MCF 10A (cell line): ENCODE measurements at regions of chr18 and their contacts with region 1.

Region 1: GRCh38 chr18:2571200-2572143 is at the starts of genes METTL4 and NDC80:
- DNase-seq: peak; percentile 89
- H3K4me3 Mint-ChIP-seq: peak within 1 kb of the TSS; percentile 98
- H3K27ac Mint-ChIP-seq: peak within 1 kb of the TSS; percentile 99
- H3K4me1 Mint-ChIP-seq: peaks cover 45% of the 10 kb centered on the region
- H3K27me3 Mint-ChIP-seq: no peaks in the 10 kb centered on the region
- CTCF ChIP-seq: no peak
- total RNA-seq, gene METTL4: 11.8 and 15.0 TPM in 2 replicates
- total RNA-seq, gene NDC80: 20.4 and 29.6 TPM in 2 replicates

Region 2: GRCh38 chr18:2589345-2590068 is 18.0 kb after region 1 on chr18:
- CTCF ChIA-PET with region 1: interaction called, 3 read pairs
- POLR2A ChIA-PET with region 1: interaction called, 43 read pairs
- intact Hi-C with region 1: no loop called
- DNase-seq: peak; percentile 56
- H3K4me3 Mint-ChIP-seq: no peak overlapping the region
- H3K27ac Mint-ChIP-seq: peak overlapping the region; percentile 85
- H3K4me1 Mint-ChIP-seq: peaks cover 14% of the 10 kb centered on the region
- H3K27me3 Mint-ChIP-seq: no peaks in the 10 kb centered on the region
- CTCF ChIP-seq: no peak

Region 3: GRCh38 chr18:2606335-2606734 is 34.9 kb after region 1 on chr18:
- CTCF ChIA-PET with region 1: no interaction called
- POLR2A ChIA-PET with region 1: interaction called, 19 read pairs
- intact Hi-C with region 1: no loop called
- DNase-seq: no peak
- H3K4me3 Mint-ChIP-seq: peak overlapping the region; percentile 31
- H3K27ac Mint-ChIP-seq: peak overlapping the region; percentile 47
- H3K4me1 Mint-ChIP-seq: peaks cover 12% of the 10 kb centered on the region
- H3K27me3 Mint-ChIP-seq: no peaks in the 10 kb centered on the region
- CTCF ChIP-seq: no peak

Region 4: DNA sequence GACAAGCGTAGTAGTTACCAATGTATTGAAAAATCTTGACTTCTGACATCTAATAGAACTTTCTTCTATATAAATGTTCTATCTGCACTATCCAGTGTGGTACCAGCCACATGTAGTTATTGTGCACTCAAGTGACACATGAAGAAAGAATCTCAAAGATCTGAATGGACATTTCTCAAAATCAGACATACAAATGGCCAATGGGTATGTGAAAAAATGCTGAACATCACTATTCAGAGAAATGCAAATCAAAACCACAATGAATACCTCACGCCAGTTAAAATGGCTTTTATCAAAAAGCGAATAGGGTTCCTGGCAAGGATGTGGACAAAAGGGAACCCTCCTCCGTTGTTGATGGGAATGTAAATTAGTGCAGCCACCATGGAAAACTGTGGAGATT is 46.5 kb after region 1 on chr18:
- CTCF ChIA-PET with region 1: no interaction called
- POLR2A ChIA-PET with region 1: no interaction called
- intact Hi-C with region 1: no loop called
- DNase-seq: no peak
- H3K4me3 Mint-ChIP-seq: no peak overlapping the region
- H3K27ac Mint-ChIP-seq: no peak overlapping the region
- H3K4me1 Mint-ChIP-seq: no peaks in the 10 kb centered on the region
- H3K27me3 Mint-ChIP-seq: no peaks in the 10 kb centered on the region
- CTCF ChIP-seq: no peak